Activated CD8-positive, alpha-beta T cell treated with anti-CD3 and anti-CD28 coated beads for 36 hours (primary cell): ENCODE measurements at regions of chr12 and their contacts with region 1.

Region 1: DNA sequence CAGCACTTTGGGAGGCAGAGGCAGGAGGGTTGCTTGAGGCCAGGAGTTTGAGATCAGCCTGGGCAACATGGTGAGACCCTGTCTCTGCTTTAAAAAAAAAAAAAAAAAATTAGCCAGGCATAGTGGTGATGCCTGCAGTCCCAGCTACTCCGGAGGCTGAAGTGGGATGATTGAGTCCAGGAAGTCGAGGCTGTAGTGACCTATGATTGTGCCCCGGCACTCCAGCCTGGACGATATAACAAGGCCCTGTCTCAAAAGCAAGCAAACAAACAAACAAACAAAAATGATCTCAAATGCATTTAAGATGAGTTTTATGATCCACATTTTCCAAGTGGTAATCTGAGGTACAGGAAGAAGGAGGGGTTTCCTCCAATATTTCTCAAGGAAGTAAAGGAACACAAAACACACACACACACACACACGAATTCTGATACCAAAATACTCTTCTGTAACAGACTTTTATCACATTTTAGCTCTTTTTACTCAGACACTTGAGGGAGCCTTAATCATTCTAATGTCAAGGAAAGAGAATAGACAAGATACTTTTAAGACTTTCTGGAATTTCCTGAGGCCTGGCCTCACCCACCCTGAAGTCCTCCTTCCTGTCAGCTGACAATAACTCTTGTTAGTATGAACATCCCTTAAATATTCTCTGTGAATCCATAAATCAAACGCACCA is 44.4 kb upstream of the CERS5 start:
- DNase-seq: no peak
- ATAC-seq: peak; percentile 42
- H3K4me3 Mint-ChIP-seq: peak overlapping the region; percentile 34
- H3K27ac Mint-ChIP-seq: peak overlapping the region; percentile 90
- H3K4me1 Mint-ChIP-seq: peaks cover 35% of the 10 kb centered on the region
- H3K27me3 Mint-ChIP-seq: no peaks in the 10 kb centered on the region
- CTCF ChIP-seq: no peak

Region 2: GRCh38 chr12:50066433-50066832 is 145.1 kb before region 1 on chr12:
- CTCF ChIA-PET with region 1: no interaction called
- POLR2A ChIA-PET with region 1: no interaction called
- intact Hi-C with region 1: no loop called
- DNase-seq: no peak
- ATAC-seq: no peak
- H3K4me3 Mint-ChIP-seq: no peak overlapping the region
- H3K27ac Mint-ChIP-seq: no peak overlapping the region
- H3K4me1 Mint-ChIP-seq: peaks cover 4% of the 10 kb centered on the region
- H3K27me3 Mint-ChIP-seq: no peaks in the 10 kb centered on the region
- CTCF ChIP-seq: no peak

Region 3: DNA sequence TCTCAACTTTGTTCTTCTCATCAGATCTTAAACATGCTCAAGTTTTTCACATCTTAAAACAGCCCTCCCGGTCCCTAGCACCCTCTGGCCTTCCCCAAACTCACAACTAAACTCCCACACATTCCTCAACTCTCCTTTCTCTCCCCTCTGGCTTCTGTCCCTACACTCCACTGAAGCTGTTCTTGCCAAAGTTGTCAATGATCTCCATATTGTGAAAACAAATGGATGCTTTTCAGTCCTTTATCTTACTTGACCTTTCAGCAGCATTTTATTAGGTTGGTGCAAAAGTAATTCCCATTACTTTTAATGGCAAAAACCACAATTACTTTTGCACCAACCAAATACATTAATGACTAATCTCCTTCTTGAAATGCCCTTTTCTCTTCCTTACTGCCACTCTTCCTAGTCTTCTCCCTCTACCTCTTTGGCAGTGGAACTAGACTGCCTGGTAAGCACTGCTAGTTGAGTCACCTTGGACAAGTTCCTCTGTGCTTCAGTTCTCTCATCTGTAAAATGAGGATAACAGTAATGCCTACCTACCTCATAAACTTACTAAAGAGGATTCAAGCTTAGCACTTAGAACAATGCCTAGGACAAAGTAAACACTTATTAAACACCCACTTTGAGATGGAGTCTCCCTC is 60.4 kb before region 1 on chr12:
- CTCF ChIA-PET with region 1: no interaction called
- POLR2A ChIA-PET with region 1: no interaction called
- intact Hi-C with region 1: no loop called
- DNase-seq: no peak
- ATAC-seq: no peak
- H3K4me3 Mint-ChIP-seq: no peak overlapping the region
- H3K27ac Mint-ChIP-seq: peak overlapping the region; percentile 60
- H3K4me1 Mint-ChIP-seq: peaks cover 21% of the 10 kb centered on the region
- H3K27me3 Mint-ChIP-seq: no peaks in the 10 kb centered on the region
- CTCF ChIP-seq: no peak

Region 4: DNA sequence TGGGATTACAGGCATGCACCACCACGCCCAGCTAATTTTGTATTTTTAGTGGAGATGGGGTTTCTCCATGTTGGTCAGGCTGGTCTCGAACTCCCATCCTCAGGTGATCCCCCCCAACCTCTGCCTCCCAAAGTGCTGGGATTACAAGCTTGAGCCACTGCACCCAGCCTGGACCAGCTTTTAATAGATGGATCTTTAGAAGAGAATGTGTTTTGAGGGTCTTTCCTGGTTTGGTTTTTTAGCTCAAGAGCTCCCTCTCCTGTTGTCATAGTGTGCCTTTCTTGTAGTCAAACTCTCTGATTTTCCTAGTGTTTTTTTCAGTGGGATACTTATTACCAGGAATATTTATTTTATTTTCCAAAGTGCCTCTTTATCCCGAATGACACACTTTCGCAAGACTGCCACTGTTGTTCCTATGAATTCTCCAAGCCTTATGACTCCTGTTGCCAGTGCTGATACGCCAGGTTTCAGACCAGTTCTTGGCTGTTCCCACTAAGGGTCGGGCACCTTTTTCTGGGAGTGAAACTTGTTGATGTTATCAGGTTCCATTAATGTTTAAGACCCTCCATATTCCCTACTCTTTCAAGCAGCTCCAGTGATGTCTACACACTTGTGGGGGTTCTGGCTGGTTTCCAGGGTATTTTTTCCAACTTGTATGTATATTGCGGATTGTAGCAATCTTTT is 103.2 kb after region 1 on chr12:
- CTCF ChIA-PET with region 1: interaction called, 11 read pairs
- POLR2A ChIA-PET with region 1: no interaction called
- intact Hi-C with region 1: no loop called
- DNase-seq: no peak
- ATAC-seq: no peak
- H3K4me3 Mint-ChIP-seq: no peak overlapping the region
- H3K27ac Mint-ChIP-seq: no peak overlapping the region
- H3K4me1 Mint-ChIP-seq: peaks cover 2% of the 10 kb centered on the region
- H3K27me3 Mint-ChIP-seq: no peaks in the 10 kb centered on the region
- CTCF ChIP-seq: peak; percentile 70